Cardiac septum (tissue), 1 donor: ENCODE measurements at regions of chr1 and their contacts with region 1.

Region 1: GRCh38 chr1:237386362-237387143 is 344.6 kb downstream of the RYR2 start:
- DNase-seq: no peak

Region 2: DNA sequence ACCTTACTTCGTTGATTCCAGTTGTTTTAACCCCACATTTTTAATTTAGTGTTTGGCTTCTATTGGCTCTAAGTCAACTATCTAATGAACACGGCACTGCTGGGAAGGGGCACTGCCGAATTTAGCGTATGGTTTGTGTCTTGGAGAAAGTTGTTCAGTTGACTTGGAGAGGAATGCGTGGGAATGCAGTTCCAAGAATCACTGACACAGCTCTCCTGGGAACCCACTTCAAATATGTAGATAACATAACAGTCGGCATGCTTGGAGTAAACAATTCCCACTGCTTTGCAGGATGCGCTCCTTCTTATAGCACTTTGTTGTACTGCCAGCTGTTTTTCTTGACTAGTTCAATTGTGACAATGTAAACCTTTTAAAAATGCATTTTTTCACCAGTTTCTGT is 240.3 kb before region 1 on chr1:
- intact Hi-C with region 1: loop called (anchors 10 kb)
- DNase-seq: no peak